Naive thymus-derived CD4-positive, alpha-beta T cell (primary cell): ENCODE measurements at regions of chr4 and their contacts with region 1.

Region 1: GRCh38 chr4:40199999-40200874 is 3.4 kb downstream of the RHOH start:
- DNase-seq: peak in 8 of 9 donors; percentile 51 to 73 (median 61)
- ATAC-seq: peak; percentile 42
- H3K4me3 ChIP-seq: peak overlapping the region; percentile 96
- H3K4me3 Mint-ChIP-seq: peak overlapping the region; percentile 96 to 100 (median 99)
- H3K27ac ChIP-seq: peak overlapping the region; percentile 100
- H3K27ac Mint-ChIP-seq: peak overlapping the region; percentile 98 to 100 (median 99)
- H3K4me1 ChIP-seq: peaks cover 19 to 20% of the 10 kb centered on the region in 2 donors
- H3K4me1 Mint-ChIP-seq: peaks cover 37 to 54% (median 44%) of the 10 kb centered on the region in 7 donors
- H3K27me3 ChIP-seq: no peaks in the 10 kb centered on the region
- H3K27me3 Mint-ChIP-seq: peaks cover 0 to 5% (median 0%) of the 10 kb centered on the region in 5 donors

Region 2: DNA sequence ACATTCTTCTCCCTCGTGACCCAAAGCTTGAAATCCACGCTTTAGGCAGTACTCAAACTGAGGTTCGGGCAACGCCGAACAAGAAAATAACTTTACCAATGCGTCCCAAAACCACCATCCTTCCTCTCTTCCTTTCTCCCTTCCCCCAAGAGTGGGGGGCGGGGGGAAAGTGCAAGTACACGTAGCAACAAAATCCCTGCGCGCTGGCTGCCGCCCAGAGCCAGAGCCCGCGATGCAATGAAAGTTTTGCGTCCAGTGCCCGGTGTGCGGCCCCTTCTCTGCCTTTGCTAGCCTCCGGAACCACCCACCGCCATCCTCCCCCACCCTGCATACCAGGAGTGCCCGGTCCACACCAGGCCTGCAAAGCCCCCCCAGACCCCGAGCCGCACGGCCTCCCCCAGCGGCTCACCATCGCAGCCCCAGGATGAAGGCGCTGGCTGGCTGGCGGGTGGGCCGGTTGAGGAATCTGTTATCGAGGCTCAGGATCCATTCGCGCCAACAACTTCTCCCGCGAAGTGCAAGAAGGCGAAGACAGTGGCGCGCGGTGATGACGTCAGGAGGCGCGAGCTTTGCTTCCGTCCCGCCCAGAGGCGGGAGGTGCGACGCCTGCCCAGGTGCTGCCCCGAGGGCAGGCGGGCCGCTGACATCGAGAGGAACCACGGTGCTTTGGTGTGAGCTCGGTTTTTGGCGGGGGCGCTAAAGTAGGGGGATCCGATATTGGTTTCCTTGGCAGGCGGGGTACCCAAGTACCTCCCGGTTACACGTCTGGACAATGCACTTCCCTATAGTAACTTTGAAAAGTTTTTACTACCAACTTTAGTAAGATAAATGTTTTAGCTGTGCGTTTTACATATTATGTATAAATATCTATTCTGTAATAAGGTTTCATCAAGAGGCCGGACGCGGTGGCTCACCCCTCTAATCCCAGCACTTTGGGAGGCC is 834.1 kb before region 1 on chr4 and contains the start of gene RFC1:
- CTCF ChIA-PET with region 1: no interaction called
- POLR2A ChIA-PET with region 1: no interaction called
- intact Hi-C with region 1: loop called in 1 of 2 experiments (anchors 10 kb)
- DNase-seq: peak; percentile 84 to 92 (median 91)
- ATAC-seq: peak; percentile 98
- H3K4me3 ChIP-seq: peak within 1 kb of the TSS; percentile 69
- H3K4me3 Mint-ChIP-seq: peak within 1 kb of the TSS; percentile 88 to 98 (median 94)
- H3K27ac ChIP-seq: peak within 1 kb of the TSS; percentile 84
- H3K27ac Mint-ChIP-seq: peak within 1 kb of the TSS; percentile 72 to 97 (median 92)
- H3K4me1 ChIP-seq: peaks cover 12 to 19% of the 10 kb centered on the region in 2 donors
- H3K4me1 Mint-ChIP-seq: peaks cover 33 to 59% (median 41%) of the 10 kb centered on the region in 7 donors
- H3K27me3 ChIP-seq: no peaks in the 10 kb centered on the region
- H3K27me3 Mint-ChIP-seq: no peaks in the 10 kb centered on the region
- total RNA-seq, gene RFC1: 62.4 to 66.4 (median 64.3) TPM

Region 3: GRCh38 chr4:39480902-39481695 is 719.1 kb before region 1 on chr4:
- CTCF ChIA-PET with region 1: no interaction called
- POLR2A ChIA-PET with region 1: no interaction called
- intact Hi-C with region 1: no loop called
- DNase-seq: no peak
- ATAC-seq: peak; percentile 29
- H3K4me3 ChIP-seq: no peak overlapping the region
- H3K4me3 Mint-ChIP-seq: no peak overlapping the region
- H3K27ac ChIP-seq: no peak overlapping the region
- H3K27ac Mint-ChIP-seq: peak overlapping the region in 1 of 9 donors; percentile 47
- H3K4me1 ChIP-seq: no peaks in the 10 kb centered on the region
- H3K4me1 Mint-ChIP-seq: no peaks in the 10 kb centered on the region
- H3K27me3 ChIP-seq: no peaks in the 10 kb centered on the region
- H3K27me3 Mint-ChIP-seq: no peaks in the 10 kb centered on the region

Region 4: GRCh38 chr4:40121515-40121914 is 78.7 kb before region 1 on chr4:
- CTCF ChIA-PET with region 1: no interaction called
- POLR2A ChIA-PET with region 1: no interaction called
- intact Hi-C with region 1: loop called in 1 of 2 experiments (anchors 2 kb)
- DNase-seq: no peak
- ATAC-seq: peak; percentile 69
- H3K4me3 ChIP-seq: no peak overlapping the region
- H3K4me3 Mint-ChIP-seq: no peak overlapping the region
- H3K27ac ChIP-seq: peak overlapping the region; percentile 17
- H3K27ac Mint-ChIP-seq: peak overlapping the region; percentile 12 to 75 (median 67)
- H3K4me1 ChIP-seq: peaks cover 7 to 25% of the 10 kb centered on the region in 2 donors
- H3K4me1 Mint-ChIP-seq: peaks cover 3 to 71% (median 54%) of the 10 kb centered on the region in 7 donors
- H3K27me3 ChIP-seq: no peaks in the 10 kb centered on the region
- H3K27me3 Mint-ChIP-seq: no peaks in the 10 kb centered on the region

Region 5: GRCh38 chr4:40221744-40222143 is 21.5 kb after region 1 on chr4:
- CTCF ChIA-PET with region 1: interaction called, 3 read pairs
- POLR2A ChIA-PET with region 1: interaction called, 90 read pairs
- intact Hi-C with region 1: no loop called
- DNase-seq: no peak
- ATAC-seq: no peak
- H3K4me3 ChIP-seq: no peak overlapping the region
- H3K4me3 Mint-ChIP-seq: peak overlapping the region; percentile 45 to 99 (median 62)
- H3K27ac ChIP-seq: peak overlapping the region; percentile 51
- H3K27ac Mint-ChIP-seq: peak overlapping the region; percentile 65 to 99 (median 91)
- H3K4me1 ChIP-seq: peaks cover 91 to 94% of the 10 kb centered on the region in 2 donors
- H3K4me1 Mint-ChIP-seq: peaks cover 60 to 98% (median 90%) of the 10 kb centered on the region in 7 donors
- H3K27me3 ChIP-seq: no peaks in the 10 kb centered on the region
- H3K27me3 Mint-ChIP-seq: no peaks in the 10 kb centered on the region

Region 6: DNA sequence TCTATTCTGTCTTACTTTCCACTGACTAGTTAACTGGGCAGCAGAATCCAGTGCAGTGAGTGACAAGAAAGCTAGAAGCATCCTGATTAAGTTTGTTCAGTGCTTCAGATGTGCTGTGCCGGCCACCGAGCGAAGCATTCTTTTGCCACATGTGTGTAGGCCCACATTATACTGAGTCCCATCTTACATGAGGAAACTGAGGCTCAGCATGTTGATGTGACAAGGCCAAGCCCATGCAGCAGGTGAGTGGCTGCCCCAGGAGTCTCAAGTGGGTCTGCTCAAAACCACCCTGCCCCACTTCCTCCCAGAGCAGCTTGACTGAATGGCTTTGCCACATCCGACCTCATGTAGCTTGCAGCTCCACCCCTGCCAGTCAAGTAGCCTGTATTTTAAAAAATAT is 47.1 kb after region 1 on chr4:
- CTCF ChIA-PET with region 1: interaction called, 3 read pairs
- POLR2A ChIA-PET with region 1: interaction called, 16 read pairs
- intact Hi-C with region 1: loop called in 1 of 2 experiments (anchors 1 kb)
- DNase-seq: peak in 7 of 9 donors; percentile 68 to 75 (median 73)
- ATAC-seq: peak; percentile 83
- H3K4me3 ChIP-seq: peak overlapping the region; percentile 14
- H3K4me3 Mint-ChIP-seq: peak overlapping the region; percentile 37 to 83 (median 69)
- H3K27ac ChIP-seq: peak overlapping the region; percentile 78
- H3K27ac Mint-ChIP-seq: peak overlapping the region; percentile 84 to 99 (median 96)
- H3K4me1 ChIP-seq: peaks cover 61 to 82% of the 10 kb centered on the region in 2 donors
- H3K4me1 Mint-ChIP-seq: peaks cover 53 to 93% (median 84%) of the 10 kb centered on the region in 7 donors
- H3K27me3 ChIP-seq: no peaks in the 10 kb centered on the region
- H3K27me3 Mint-ChIP-seq: no peaks in the 10 kb centered on the region

Region 7: GRCh38 chr4:40309250-40309774 is 109.1 kb after region 1 on chr4:
- CTCF ChIA-PET with region 1: interaction called, 8 read pairs
- POLR2A ChIA-PET with region 1: interaction called, 229 read pairs
- intact Hi-C with region 1: loop called (anchors 1 kb)
- DNase-seq: peak; percentile 75 to 89 (median 86)
- ATAC-seq: peak; percentile 79
- H3K4me3 ChIP-seq: peak overlapping the region; percentile 35
- H3K4me3 Mint-ChIP-seq: peak overlapping the region; percentile 67 to 91 (median 78)
- H3K27ac ChIP-seq: peak overlapping the region; percentile 87
- H3K27ac Mint-ChIP-seq: peak overlapping the region; percentile 94 to 100 (median 99)
- H3K4me1 ChIP-seq: peaks cover 50 to 81% of the 10 kb centered on the region in 2 donors
- H3K4me1 Mint-ChIP-seq: peaks cover 61 to 97% (median 90%) of the 10 kb centered on the region in 7 donors
- H3K27me3 ChIP-seq: no peaks in the 10 kb centered on the region
- H3K27me3 Mint-ChIP-seq: no peaks in the 10 kb centered on the region